ENCODE measurements at regions of chr19 and their contacts with region 1.

Region 1: DNA sequence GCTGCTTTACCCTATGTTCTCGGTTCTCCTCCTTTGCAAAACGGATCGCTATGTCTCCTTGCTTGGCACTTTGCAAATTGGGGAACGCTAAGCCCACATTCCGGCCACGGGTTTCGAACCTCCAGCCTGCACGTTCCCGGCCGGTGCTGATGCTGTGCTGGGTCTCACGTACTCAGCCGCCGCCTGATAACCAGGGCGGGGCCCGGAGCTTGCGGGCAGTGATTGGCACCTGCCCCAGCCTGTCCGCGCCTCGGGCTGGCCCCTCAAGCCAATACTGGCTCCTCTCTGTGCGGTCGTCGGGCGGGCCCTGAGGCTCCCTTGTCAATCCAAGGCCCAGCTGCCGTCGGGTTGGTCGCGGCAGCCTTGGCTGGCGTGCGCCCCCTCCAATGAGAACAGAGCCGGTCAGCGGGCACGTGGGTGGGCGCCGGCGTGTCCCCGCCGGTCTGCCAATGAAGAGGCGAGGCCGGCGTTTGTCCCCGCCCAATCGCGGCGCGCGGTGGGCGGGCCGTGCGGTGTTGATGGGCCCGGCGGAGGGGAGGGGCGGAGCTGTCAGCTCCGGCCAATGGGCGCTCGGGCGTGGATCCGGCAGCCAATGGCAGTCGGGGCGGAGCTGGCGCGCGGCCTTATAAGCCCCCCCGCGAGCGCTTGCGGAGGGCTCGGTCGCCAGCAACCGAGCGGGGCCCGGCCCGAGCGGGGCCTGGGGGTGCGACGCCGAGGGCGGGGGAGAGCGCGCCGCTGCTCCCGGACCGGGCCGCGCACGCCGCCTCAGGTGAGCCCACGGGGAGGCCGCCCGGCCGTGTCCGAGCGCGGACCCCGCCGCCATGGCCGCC is at the start of gene KDM4B:
- DNase-seq: peak; percentile 94 to 100 (median 99)
- ATAC-seq: peak; percentile 93 to 94
- H3K4me3 Mint-ChIP-seq: peak within 1 kb of the TSS; percentile 83 to 97 (median 92)
- H3K27ac Mint-ChIP-seq: peak within 1 kb of the TSS; percentile 81 to 96 (median 94)
- H3K4me1 Mint-ChIP-seq: peaks cover 25 to 43% (median 35%) of the 10 kb centered on the region in 4 donors
- H3K27me3 Mint-ChIP-seq: no peaks in the 10 kb centered on the region
- polyA plus RNA-seq, gene KDM4B: 14.3 to 18.7 (median 14.7) TPM

Region 2: DNA sequence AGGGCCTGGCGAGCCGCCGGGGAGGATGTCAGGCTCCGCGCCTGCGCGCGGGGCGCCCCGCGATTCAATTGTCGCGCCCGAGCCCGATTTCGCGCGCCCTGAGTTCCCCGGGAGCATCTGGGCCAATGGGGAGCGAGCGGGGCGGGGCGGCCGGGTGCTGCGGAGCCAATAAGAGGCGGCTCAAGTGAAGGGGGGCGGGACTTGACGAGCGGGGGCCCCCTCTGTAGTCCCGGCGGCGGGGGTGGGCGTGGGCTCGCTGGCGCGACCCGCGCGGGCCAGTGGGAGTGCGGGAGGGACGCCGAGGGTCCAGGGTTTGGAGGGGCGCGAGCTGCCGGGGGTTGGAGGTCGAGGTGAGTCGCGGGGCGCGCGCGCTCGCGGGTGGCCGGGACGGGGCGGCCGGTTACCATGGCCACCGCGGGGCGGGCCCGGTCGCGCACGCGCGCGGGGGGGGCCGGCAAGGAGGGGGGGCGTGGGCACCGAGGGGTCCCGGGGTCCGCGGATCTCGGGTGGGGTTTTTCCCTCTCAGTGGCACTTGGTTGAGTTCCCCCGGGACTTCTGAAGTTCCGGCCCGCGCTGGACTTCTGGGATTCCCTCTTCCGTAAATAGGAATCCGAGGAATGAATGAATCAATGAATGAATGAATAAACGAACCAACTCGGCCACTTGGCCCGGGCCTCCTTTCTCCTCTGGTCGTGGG is 58.6 kb before region 1 on chr19:
- POLR2A ChIA-PET with region 1: interaction called, 63 read pairs
- DNase-seq: peak; percentile 90 to 96 (median 93)
- ATAC-seq: peak; percentile 83 to 87
- H3K4me3 Mint-ChIP-seq: peak overlapping the region; percentile 97 to 100 (median 100)
- H3K27ac Mint-ChIP-seq: peak overlapping the region in 5 of 10 donors; percentile 3 to 99 (median 67)
- H3K4me1 Mint-ChIP-seq: peaks cover 25 to 76% (median 64%) of the 10 kb centered on the region in 4 donors
- H3K27me3 Mint-ChIP-seq: no peaks in the 10 kb centered on the region

Region 3: GRCh38 chr19:4916292-4917082 is 52.2 kb before region 1 on chr19:
- POLR2A ChIA-PET with region 1: interaction called, 63 read pairs
- DNase-seq: peak; percentile 36 to 77 (median 58)
- ATAC-seq: peak; percentile 59 to 64
- H3K4me3 Mint-ChIP-seq: peak overlapping the region; percentile 97 to 100 (median 100)
- H3K27ac Mint-ChIP-seq: peak overlapping the region; percentile 97 to 100 (median 99)
- H3K4me1 Mint-ChIP-seq: peaks cover 19 to 55% (median 42%) of the 10 kb centered on the region in 4 donors
- H3K27me3 Mint-ChIP-seq: no peaks in the 10 kb centered on the region

Region 4: DNA sequence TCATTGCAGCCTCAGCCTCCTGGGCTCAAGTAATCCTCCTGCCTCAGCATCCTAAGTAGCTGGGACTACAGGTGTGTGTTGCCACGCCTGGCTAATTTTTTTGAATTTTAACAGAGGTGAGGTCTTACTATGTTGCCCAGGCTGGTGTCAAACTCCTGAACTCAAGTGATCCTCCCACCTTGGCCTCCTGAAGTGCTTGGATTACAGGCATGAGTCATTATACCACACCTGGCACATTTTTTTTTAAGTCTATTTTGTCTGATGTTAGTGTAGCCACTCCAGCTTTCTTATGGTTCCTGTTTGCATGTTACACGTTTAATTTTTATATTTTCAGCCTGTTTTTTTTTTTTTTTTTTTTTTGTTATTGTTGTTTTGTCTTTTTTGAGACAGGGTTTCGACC is 25.0 kb after region 1 on chr19:
- POLR2A ChIA-PET with region 1: no interaction called
- DNase-seq: no peak
- ATAC-seq: no peak
- H3K4me3 Mint-ChIP-seq: no peak overlapping the region
- H3K27ac Mint-ChIP-seq: peak overlapping the region in 4 of 10 donors; percentile 7 to 56 (median 36)
- H3K4me1 Mint-ChIP-seq: peaks cover 10 to 32% (median 28%) of the 10 kb centered on the region in 4 donors
- H3K27me3 Mint-ChIP-seq: no peaks in the 10 kb centered on the region

Region 5: DNA sequence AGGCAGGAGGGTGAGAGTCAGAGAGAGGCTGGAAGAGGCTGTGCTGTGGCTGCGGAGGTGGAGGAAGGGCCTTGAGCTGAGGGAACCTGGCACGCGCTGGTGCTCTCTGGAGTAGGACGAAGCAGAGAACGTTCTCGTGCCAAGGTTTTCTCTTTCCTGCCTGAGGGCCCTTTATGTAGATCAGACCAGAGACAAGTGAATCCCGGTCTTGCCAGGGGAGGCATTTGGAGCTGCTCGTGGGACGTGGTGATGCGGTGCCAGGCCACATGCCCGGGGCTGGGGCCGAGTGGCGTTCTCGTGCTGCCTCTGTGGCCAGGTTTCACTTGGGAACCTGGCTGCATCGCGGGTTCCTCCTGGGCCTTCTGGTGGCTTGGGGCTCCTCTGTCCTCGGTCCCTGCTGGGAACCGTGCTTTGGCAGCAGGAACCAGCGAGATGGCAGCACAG is 54.5 kb after region 1 on chr19:
- POLR2A ChIA-PET with region 1: no interaction called
- DNase-seq: no peak
- ATAC-seq: no peak
- H3K4me3 Mint-ChIP-seq: no peak overlapping the region
- H3K27ac Mint-ChIP-seq: peak overlapping the region in 1 of 10 donors; percentile 71
- H3K4me1 Mint-ChIP-seq: peaks cover 4 to 12% (median 7%) of the 10 kb centered on the region in 4 donors
- H3K27me3 Mint-ChIP-seq: no peaks in the 10 kb centered on the region

Measured in naive thymus-derived CD8-positive, alpha-beta T cell (primary cell).